Transverse colon (tissue), 4 donors: ENCODE measurements at regions of chr9 and their contacts with region 1.

Region 1: DNA sequence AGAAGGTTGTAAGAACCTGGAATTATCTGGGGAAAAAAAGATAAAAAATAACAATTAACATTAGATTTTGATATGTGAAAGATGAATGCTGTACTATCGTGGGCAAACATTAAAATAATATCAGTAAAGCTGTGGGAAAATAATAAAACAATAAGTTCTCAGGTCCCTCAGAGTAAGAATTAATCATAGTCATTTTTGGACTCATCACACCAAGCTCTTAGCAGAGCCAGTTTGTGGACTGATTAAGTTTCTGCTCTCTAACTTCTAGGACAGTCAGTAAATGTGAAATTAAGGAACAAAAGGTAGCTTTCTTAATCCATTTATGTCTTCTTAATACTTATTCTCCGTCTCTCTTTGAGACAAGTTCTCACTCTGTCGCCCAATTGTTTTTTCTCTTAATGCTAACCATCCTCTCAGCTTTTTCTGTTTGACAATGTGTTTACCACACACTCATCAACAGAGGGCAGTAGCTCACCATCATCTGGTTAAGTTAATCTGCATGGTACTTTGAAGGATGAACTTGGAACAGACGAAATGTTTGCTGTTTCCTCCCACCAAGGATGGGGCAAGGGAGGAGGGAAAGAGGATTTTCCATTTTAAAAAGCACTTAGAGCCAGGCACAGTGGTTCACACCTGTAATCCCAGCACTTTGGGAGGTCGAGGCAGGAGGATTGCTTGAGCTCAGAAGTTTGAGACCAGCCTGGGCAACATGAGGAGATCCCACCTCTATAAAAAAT is 5.3 kb upstream of the ACO1 start:
- DNase-seq: peak; percentile 22
- H3K4me3 ChIP-seq: no peak overlapping the region
- H3K27ac ChIP-seq: no peak overlapping the region
- H3K4me1 ChIP-seq: peaks cover 0 to 11% (median 6%) of the 10 kb centered on the region in 4 donors
- H3K27me3 ChIP-seq: peaks cover 9% of the 10 kb centered on the region
- CTCF ChIP-seq: peak; percentile 62 to 85 (median 67)
- EP300 ChIP-seq: no peak
- POLR2A ChIP-seq: no peak

Region 2: GRCh38 chr9:32399108-32399815 is 20.1 kb after region 1 on chr9:
- in situ Hi-C with region 1: no loop called
- intact Hi-C with region 1: loop called (anchors 1 kb)
- DNase-seq: no peak
- H3K4me3 ChIP-seq: no peak overlapping the region
- H3K27ac ChIP-seq: no peak overlapping the region
- H3K4me1 ChIP-seq: peaks cover 0 to 6% (median 0%) of the 10 kb centered on the region in 4 donors
- H3K27me3 ChIP-seq: no peaks in the 10 kb centered on the region
- CTCF ChIP-seq: no peak
- EP300 ChIP-seq: no peak
- POLR2A ChIP-seq: no peak

Region 3: GRCh38 chr9:32533336-32533735 is 154.2 kb after region 1 on chr9:
- in situ Hi-C with region 1: no loop called
- intact Hi-C with region 1: no loop called
- DNase-seq: no peak
- H3K4me3 ChIP-seq: no peak overlapping the region
- H3K27ac ChIP-seq: no peak overlapping the region
- H3K4me1 ChIP-seq: no peaks in the 10 kb centered on the region
- H3K27me3 ChIP-seq: no peaks in the 10 kb centered on the region
- CTCF ChIP-seq: no peak
- EP300 ChIP-seq: no peak
- POLR2A ChIP-seq: no peak

Region 4: DNA sequence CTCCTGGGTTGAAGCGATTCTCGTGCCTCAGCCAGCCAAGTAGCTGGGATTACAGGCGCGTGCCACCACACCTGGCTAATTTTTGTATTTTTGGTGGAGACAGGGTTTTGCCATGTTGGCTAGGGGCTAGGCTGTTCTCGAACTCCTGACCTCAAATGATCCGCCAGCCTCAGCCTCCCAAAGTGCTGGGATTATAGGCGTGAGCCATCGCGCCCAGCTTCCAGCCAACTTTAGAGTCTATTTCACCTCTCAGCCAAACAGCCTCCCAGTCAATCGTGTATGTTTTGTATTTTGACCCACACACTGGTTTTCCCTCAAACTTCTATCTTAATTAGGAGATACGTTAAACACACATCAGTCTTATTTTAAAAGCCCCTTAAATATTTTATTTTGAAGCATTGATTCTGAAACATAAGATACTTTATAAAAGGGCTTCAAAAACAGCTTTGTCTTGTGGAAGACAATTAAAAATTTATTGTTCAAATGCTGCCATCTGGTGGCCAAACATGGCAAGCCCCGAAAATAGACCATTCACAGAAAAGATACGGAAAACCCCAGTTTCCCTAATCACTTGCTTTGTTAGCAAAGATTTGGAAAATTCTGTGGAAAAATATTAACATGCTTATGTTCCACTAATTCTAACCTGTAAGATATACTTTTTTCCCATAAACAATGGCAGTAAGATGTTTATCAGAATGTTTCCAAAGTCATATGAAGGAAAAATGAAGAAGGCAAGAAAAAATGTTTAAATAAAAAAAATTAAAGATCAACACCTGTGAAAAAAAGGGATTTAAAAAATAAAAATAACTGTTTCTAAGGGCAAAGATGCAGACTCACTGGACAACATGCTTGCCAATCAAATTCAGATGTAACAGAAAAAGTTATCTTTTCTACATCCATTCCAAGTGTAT is 589.2 kb after region 1 on chr9:
- in situ Hi-C with region 1: loop called in 3 of 4 experiments (anchors 10 to 25 kb)
- intact Hi-C with region 1: loop called (anchors 5 kb)
- DNase-seq: peak; percentile 47
- H3K4me3 ChIP-seq: no peak overlapping the region
- H3K27ac ChIP-seq: no peak overlapping the region
- H3K4me1 ChIP-seq: no peaks in the 10 kb centered on the region
- H3K27me3 ChIP-seq: no peaks in the 10 kb centered on the region
- CTCF ChIP-seq: peak; percentile 70 to 87 (median 82)
- EP300 ChIP-seq: no peak
- POLR2A ChIP-seq: no peak

Region 5: DNA sequence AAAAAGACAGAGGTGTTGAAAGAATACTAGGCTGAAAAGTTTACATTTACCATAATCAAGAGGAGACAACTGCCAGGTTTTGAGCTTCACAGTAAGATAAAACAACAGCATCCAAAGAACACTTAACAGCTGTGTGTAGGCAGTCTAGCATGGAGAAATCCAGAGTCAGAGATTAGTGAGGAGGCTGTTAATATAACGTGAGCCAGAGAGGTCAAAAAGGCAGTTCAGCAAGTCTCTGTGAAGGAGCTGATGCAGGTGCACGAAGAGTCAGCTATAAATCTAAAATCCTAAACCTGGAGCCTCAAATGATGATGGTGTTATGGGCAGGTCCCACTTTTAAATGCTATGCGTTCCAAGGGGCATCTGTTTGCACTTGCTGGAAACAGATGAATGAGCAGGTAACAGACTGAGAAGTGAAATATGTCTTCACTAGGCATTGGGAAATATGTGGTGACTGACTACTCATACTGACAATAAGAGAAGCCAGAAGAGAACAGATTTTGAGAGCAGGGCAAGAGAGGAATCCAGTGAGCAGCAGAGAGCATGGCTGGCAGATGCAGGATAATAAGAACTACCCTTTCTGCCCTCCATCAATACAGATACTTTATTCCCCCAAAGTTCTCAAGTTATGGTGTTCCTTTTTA is 613.6 kb after region 1 on chr9:
- in situ Hi-C with region 1: loop called in 1 of 4 experiments (anchors 25 kb)
- intact Hi-C with region 1: no loop called
- DNase-seq: no peak
- H3K4me3 ChIP-seq: no peak overlapping the region
- H3K27ac ChIP-seq: no peak overlapping the region
- H3K4me1 ChIP-seq: peaks cover 0 to 5% (median 0%) of the 10 kb centered on the region in 4 donors
- H3K27me3 ChIP-seq: no peaks in the 10 kb centered on the region
- CTCF ChIP-seq: no peak
- EP300 ChIP-seq: no peak
- POLR2A ChIP-seq: no peak